Natural killer cell (primary cell): ENCODE measurements at regions of chr16 and their contacts with region 1.

Region 1: GRCh38 chr16:81481207-81481821 is 36.7 kb downstream of the CMIP start:
- DNase-seq: peak; percentile 31 to 36
- ATAC-seq: peak; percentile 64 to 89 (median 68)
- H3K4me3 ChIP-seq: no peak overlapping the region
- H3K4me3 Mint-ChIP-seq: peak overlapping the region; percentile 52
- H3K27ac ChIP-seq: peak overlapping the region; percentile 83
- H3K27ac Mint-ChIP-seq: peak overlapping the region; percentile 88 to 97
- H3K4me1 ChIP-seq: peaks cover 74% of the 10 kb centered on the region
- H3K4me1 Mint-ChIP-seq: peaks cover 75 to 85% of the 10 kb centered on the region in 2 donors
- H3K27me3 ChIP-seq: no peaks in the 10 kb centered on the region
- H3K27me3 Mint-ChIP-seq: no peaks in the 10 kb centered on the region
- CTCF ChIP-seq: no peak

Region 2: GRCh38 chr16:81444448-81445121 is 36.7 kb before region 1 on chr16 and contains the start of gene CMIP:
- intact Hi-C with region 1: loop called (anchors 2 kb)
- DNase-seq: peak; percentile 90 to 91
- ATAC-seq: peak; percentile 67 to 89 (median 79)
- H3K4me3 ChIP-seq: peak within 1 kb of the TSS; percentile 74
- H3K4me3 Mint-ChIP-seq: peak within 1 kb of the TSS; percentile 93
- H3K27ac ChIP-seq: peak within 1 kb of the TSS; percentile 88
- H3K27ac Mint-ChIP-seq: peak within 1 kb of the TSS; percentile 91 to 93
- H3K4me1 ChIP-seq: peaks cover 48% of the 10 kb centered on the region
- H3K4me1 Mint-ChIP-seq: peaks cover 45 to 53% of the 10 kb centered on the region in 2 donors
- H3K27me3 ChIP-seq: no peaks in the 10 kb centered on the region
- H3K27me3 Mint-ChIP-seq: no peaks in the 10 kb centered on the region
- CTCF ChIP-seq: no peak
- total RNA-seq, gene CMIP: 88.2 to 115 (median 91.5) TPM

Region 3: DNA sequence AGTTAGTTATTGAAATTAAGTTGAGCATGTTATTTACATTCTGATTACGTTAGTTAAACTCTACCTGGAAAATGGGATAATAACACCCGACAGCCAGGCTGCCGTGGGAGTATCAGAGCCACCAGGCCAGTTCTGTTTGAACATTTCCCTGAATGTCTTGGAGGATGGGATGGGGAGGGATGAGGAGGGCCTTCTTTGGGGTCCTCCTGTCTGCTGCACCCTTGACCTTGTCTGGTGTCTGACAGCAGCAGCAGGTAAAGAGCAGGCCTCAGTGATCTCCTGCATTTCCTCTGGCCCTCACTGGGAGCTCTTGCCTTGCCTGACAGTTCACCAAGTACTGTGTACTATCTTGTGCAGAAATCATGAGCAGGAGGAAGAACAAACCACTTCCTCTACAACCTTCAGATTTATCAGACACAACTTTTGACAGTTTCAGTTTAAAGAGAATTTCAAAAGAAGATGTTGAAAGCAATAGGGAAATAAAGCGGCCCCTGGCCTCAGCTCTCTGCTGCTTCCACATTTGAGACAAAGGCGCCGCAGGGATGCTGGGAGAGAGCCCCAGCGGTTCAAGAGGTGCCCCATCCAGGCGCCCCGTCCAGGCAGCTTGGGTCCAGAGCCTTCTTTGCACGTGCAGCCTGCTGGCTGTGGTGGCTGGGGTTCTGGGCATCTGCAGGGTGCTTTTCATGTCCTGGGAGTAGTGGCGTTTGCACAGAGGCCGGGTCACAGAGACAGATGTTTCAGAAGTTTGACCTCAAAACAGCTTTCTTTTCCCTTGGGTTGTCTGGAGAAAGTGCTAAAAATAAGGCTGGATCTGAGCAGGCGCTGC is 11.4 kb before region 1 on chr16:
- intact Hi-C with region 1: loop called (anchors 1 kb)
- DNase-seq: peak in 1 of 2 donors; percentile 75
- ATAC-seq: peak; percentile 65 to 90 (median 75)
- H3K4me3 ChIP-seq: peak overlapping the region; percentile 13
- H3K4me3 Mint-ChIP-seq: peak overlapping the region; percentile 88
- H3K27ac ChIP-seq: peak overlapping the region; percentile 91
- H3K27ac Mint-ChIP-seq: peak overlapping the region; percentile 95 to 97
- H3K4me1 ChIP-seq: peaks cover 92% of the 10 kb centered on the region
- H3K4me1 Mint-ChIP-seq: peaks cover 69 to 85% of the 10 kb centered on the region in 2 donors
- H3K27me3 ChIP-seq: no peaks in the 10 kb centered on the region
- H3K27me3 Mint-ChIP-seq: no peaks in the 10 kb centered on the region
- CTCF ChIP-seq: no peak

Region 4: GRCh38 chr16:81632392-81633146 is 151.3 kb after region 1 on chr16:
- intact Hi-C with region 1: no loop called
- DNase-seq: peak; percentile 68 to 91
- ATAC-seq: peak; percentile 84 to 87 (median 84)
- H3K4me3 ChIP-seq: no peak overlapping the region
- H3K4me3 Mint-ChIP-seq: peak overlapping the region; percentile 49
- H3K27ac ChIP-seq: peak overlapping the region; percentile 73
- H3K27ac Mint-ChIP-seq: peak overlapping the region; percentile 87 to 88
- H3K4me1 ChIP-seq: peaks cover 35% of the 10 kb centered on the region
- H3K4me1 Mint-ChIP-seq: peaks cover 40 to 53% of the 10 kb centered on the region in 2 donors
- H3K27me3 ChIP-seq: no peaks in the 10 kb centered on the region
- H3K27me3 Mint-ChIP-seq: no peaks in the 10 kb centered on the region
- CTCF ChIP-seq: no peak